Panc1 (cell line): ENCODE measurements at regions of chr2 and their contacts with region 1.

Region 1: DNA sequence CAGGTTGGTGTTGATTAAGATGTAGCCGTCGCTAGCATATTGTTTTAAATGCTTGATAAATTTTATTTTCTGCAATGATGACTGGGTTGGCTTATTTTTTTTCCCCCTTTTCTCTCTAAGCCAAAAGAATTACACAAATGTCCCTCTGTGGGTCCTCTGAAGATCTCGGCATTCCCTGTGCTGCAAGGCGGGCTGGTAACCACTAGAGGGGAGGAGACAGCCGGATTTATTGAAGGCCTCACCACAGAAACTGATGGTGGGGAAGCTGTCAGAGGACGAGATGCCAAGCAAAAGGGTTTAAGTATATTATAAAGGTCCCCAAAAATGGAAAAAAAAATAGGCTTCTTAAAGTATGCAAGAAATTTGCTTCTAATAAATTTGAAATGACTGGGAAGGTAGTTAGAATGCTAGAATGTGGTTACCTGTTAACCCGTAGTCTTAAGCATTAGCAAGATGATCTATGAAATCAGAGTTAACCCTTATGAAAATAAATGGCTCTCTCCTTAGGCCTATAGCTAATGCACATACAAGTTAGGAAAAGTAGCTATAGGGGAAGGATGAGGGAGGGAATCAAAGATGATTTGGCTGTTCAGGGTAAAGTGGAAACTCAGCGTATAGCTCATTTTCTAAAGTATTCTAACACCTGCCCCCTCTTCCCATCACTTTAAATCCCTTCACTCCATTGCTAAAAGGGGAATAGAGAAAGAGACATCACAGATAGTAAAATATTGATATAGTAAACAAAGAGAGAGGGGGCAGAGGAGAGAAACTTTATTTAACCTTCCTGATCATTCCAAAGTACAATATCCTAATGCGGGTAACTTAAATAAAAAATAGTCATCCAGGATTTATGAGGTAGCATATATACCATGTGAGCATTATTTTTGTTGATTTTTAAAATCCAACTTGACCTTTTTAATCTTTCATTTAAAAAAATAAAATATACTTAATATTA is 894.5 kb upstream of the POU3F3 start:
- DNase-seq: peak; percentile 15
- ATAC-seq: peak; percentile 87
- H3K4me3 ChIP-seq: no peak overlapping the region
- H3K27ac ChIP-seq: no peak overlapping the region
- H3K4me1 ChIP-seq: no peaks in the 10 kb centered on the region
- H3K27me3 ChIP-seq: no peaks in the 10 kb centered on the region
- CTCF ChIP-seq: peak; percentile 83

Region 2: DNA sequence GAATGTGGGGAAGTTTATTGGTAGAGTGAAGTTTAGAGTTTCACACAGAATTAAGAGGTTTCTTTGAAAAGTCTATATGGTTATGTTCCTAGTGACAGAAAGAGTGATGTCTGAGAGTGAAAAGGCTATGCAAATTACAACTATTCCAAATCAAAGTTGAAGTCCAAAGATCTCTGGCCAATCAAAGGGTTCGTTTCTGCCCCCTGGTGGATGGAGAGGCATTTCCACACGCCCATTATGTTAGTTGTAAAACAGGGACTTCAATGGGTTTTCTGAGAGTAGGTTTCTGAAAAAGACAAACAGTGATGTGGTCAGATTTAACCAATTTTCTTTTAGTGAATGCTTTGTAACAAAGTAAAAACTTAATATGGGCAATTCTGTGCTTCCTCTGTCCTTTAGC is 452.9 kb after region 1 on chr2:
- CTCF ChIA-PET with region 1: no interaction called
- POLR2A ChIA-PET with region 1: no interaction called
- in situ Hi-C with region 1: no loop called
- intact Hi-C with region 1: loop called (anchors 10 kb)
- DNase-seq: peak; percentile 12
- ATAC-seq: no peak
- H3K4me3 ChIP-seq: no peak overlapping the region
- H3K27ac ChIP-seq: no peak overlapping the region
- H3K4me1 ChIP-seq: no peaks in the 10 kb centered on the region
- H3K27me3 ChIP-seq: no peaks in the 10 kb centered on the region; the same call in 1 of the 2 replicates
- CTCF ChIP-seq: peak; percentile 50; the same call in 1 of the 2 replicates

Region 3: DNA sequence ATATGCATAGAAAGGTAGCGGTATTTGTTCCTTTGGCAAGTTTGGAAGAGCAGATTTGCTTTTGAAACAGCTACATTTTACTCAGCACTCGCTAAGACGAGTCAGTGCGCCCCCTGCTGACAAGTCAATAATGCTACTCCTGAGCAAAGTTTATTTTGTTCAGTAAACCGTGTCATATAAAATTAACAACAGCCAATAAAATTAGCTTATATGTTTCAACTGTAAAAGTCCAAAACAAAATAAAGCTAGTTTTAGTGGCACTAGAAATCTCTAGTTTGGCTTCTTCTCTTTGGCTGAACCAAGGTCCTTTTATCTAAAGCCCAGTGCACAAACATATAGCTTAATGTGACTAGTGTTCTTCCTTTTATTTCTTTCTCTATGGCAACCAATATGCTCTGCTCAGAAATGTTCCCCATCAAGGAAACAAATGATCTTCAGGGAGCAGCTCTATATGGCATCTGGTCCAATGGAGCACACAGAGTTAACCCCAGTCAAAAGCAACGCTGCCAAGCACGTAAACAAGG is 890.2 kb after region 1 on chr2:
- CTCF ChIA-PET with region 1: no interaction called
- POLR2A ChIA-PET with region 1: no interaction called
- in situ Hi-C with region 1: no loop called
- intact Hi-C with region 1: loop called (anchors 2 kb)
- DNase-seq: peak; percentile 17
- ATAC-seq: no peak
- H3K4me3 ChIP-seq: no peak overlapping the region
- H3K27ac ChIP-seq: no peak overlapping the region
- H3K4me1 ChIP-seq: peaks cover 8% of the 10 kb centered on the region; the same call in 1 of the 2 replicates
- H3K27me3 ChIP-seq: peaks cover 55% of the 10 kb centered on the region
- CTCF ChIP-seq: peak; percentile 85

Region 4: DNA sequence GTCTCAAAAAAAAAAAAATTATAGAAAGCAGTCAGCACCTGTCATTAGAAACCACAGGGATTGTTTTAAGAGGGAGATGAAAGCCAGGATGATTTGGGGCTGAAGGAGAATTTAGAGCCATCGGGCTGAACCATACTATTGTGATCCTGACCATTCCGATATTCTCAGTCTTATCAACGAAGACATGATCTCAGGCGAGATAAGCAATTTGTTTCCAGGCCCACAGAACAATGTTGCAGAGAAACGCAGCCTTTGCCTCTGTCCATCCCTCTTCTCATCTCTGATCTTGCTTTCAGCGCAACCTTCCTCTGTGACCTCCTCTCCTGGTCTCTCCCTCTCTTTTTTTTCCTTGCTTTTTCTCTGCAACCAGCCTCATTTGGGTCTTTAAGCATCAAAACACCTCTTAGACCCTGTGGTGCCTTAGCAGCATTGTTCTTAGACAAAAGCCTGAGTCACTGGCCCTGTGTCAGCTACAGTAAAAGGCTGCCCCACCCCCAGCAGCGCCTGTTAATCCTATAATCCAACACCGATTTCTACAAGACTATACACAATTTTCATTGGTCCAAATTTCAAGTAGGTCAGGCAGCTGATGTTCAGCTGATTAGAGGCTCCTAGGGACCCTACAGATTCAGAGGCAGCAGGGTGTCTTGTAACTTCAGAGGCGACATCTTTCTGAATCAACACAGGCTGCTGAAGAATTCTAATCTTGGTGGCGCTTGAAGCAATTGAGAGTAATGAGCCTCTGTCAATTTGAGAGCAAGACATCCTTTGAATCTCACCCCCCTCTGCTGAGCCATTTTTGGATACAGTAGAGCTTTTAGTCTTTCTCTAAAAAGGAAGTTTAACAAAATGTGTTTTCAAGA is 1991.3 kb after region 1 on chr2:
- CTCF ChIA-PET with region 1: no interaction called
- POLR2A ChIA-PET with region 1: no interaction called
- in situ Hi-C with region 1: no loop called
- intact Hi-C with region 1: no loop called
- DNase-seq: no peak
- ATAC-seq: no peak
- H3K4me3 ChIP-seq: no peak overlapping the region
- H3K27ac ChIP-seq: no peak overlapping the region
- H3K4me1 ChIP-seq: no peaks in the 10 kb centered on the region
- H3K27me3 ChIP-seq: peaks cover 3% of the 10 kb centered on the region
- CTCF ChIP-seq: no peak